ENCODE measurements at regions of chr1 and their contacts with region 1.

Region 1: DNA sequence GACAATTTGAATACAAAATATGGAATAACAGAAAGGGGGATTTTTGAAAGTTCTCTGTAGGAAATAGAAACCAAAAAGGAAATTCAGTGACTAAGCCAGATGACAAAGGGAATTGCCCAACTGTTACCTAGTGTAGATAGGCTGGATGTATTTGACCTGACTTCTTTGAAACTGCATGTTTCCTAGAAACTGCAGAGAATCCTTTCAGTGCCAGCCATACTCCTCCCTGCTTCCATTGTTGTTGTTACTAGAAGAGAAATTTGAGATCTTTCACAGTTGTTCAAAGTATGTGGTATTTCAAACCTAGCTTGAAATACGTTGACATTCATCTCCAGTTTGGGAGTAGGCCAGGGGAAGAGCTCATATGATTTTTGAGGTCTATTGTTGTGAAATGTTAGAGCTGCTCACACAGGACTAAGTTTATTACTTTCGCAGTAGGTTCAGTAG is 1.8 kb upstream of the GBP5 start:
- DNase-seq: no peak
- ATAC-seq: peak; percentile 82

Region 2: DNA sequence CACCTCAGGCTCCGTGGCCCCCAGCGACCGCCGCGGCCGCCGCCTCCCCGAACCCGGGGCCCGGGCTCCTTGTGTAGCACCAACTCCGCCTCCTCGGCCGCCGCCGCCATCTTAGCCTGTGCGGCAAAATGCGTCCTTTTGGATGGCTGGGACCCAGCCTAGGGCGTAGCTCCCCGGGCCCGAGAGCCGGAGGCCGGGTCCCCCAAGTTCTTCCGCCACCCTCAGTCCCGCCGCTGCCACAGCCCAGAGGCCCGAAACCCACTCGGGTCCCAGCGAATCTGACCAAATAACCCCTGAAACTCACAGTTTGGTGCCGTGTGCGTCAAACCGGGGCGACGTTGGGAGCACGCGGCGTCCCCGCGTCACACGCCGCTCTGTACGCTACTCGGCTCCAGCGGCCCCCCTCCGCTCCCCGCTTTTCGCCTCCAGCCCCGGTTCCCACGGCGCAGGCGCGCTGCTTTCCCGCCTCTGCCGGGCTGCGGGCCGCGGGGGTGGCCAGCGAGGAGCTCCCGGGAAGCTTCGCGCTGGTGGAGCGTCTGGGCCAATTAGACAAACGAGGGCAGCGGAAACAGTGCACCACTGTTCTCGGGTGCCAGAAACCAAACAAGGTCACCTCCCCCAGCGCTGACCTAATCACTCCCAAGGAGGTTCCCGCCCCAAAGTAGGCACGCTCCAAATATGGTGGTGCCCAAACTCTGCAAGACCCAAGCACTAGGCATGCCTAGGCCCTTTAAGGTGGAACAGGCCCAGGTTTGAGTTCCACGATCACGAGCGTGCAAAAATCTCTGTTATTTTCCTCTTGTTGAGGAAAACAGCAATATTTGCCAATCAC is 1747.5 kb after region 1 on chr1 and contains the start of gene ZNF644:
- intact Hi-C with region 1: loop called (anchors 5 kb)
- DNase-seq: peak; percentile 93
- ATAC-seq: peak; percentile 98
- total RNA-seq, gene ZNF644: 88.5 TPM